ENCODE measurements at regions of chr12 and their contacts with region 1.

Region 1: GRCh38 chr12:49967042-49967776 is 5.5 kb downstream of the AQP5 start:
- DNase-seq: peak; percentile 15
- ATAC-seq: peak; percentile 94
- H3K4me3 ChIP-seq: no peak overlapping the region
- H3K27ac ChIP-seq: no peak overlapping the region
- H3K4me1 ChIP-seq: peaks cover 8% of the 10 kb centered on the region
- H3K27me3 ChIP-seq: peaks cover 5 to 6% of the 10 kb centered on the region in 2 experiments; a peak in 3 of 4 replicates
- CTCF ChIP-seq: peak; percentile 88 to 96 (median 95)
- EP300 ChIP-seq: no peak
- POLR2A ChIP-seq: no peak
- RAD21 ChIP-seq: peak; percentile 87

Region 2: DNA sequence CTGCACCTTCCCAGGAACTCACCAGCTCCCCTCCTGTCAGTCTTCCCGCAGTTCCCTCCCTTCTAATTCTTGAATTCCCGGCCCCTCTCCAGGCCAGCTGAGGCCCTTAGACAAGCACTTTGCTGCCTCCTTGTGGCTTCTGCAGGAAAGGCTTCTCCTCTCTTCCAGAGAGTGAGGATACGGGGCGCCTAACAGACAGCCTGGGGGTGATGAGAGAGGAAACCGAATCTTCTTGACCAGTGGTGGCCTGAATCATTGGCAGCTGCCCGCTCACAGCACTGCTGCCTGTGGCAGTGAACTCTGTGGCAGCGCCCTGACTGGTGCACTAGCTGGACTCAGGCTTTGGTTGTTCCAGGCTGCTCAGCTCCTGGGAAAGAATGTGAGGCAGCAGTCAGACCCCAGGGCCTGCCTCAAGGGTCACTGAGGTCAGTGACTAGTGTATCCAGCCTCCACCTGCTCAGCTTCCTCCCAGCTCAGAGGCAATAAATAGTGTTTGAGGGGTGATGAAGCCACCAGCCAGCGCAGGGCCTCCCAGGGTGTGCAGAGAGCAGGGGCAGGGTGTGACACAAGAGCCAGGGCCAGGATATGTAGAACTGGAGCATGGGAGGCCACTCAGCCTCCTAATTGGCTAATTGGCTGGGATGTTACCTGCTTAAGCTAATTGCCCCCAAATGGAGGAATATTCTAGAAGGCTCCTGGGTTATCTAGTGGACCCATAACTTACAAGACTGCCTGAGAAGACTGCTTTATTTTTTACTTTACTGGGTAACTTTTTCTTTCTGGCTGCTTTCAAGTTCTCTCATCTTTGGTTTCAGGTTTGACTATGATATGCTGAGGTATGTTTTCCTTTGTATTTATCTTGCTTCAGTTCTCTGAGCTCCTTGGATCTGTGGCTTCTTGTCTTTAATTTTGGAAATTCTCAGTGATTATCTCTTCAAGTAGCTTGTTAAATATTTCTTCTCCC is 386.4 kb before region 1 on chr12:
- CTCF ChIA-PET with region 1: no interaction called
- POLR2A ChIA-PET with region 1: no interaction called
- RAD21 ChIA-PET with region 1: no interaction called
- SMC1A ChIA-PET with region 1: no interaction called
- in situ Hi-C with region 1: no loop called
- intact Hi-C with region 1: no loop called
- DNase-seq: no peak
- ATAC-seq: peak; percentile 92
- H3K4me3 ChIP-seq: peak overlapping the region; percentile 57; the same call in 1 of the 2 replicates
- H3K27ac ChIP-seq: peak overlapping the region; percentile 41
- H3K4me1 ChIP-seq: peaks cover 17% of the 10 kb centered on the region
- H3K27me3 ChIP-seq: no peaks in the 10 kb centered on the region
- CTCF ChIP-seq: peak; percentile 89 to 92 (median 90)
- EP300 ChIP-seq: no peak
- POLR2A ChIP-seq: no peak
- RAD21 ChIP-seq: peak; percentile 88

Region 3: GRCh38 chr12:49950273-49951251 is 16.6 kb before region 1 on chr12 and contains the start of gene AQP2:
- CTCF ChIA-PET with region 1: interaction called, 35 read pairs
- POLR2A ChIA-PET with region 1: no interaction called
- RAD21 ChIA-PET with region 1: no interaction called
- SMC1A ChIA-PET with region 1: interaction called, 6 read pairs
- in situ Hi-C with region 1: no loop called
- intact Hi-C with region 1: no loop called
- DNase-seq: no peak
- ATAC-seq: no peak
- H3K4me3 ChIP-seq: no peak within 1 kb of the TSS
- H3K27ac ChIP-seq: no peak within 1 kb of the TSS
- H3K4me1 ChIP-seq: no peaks in the 10 kb centered on the region
- H3K27me3 ChIP-seq: peaks cover 6 to 7% of the 10 kb centered on the region in 2 experiments; a peak in 3 of 4 replicates
- CTCF ChIP-seq: no peak
- EP300 ChIP-seq: no peak
- POLR2A ChIP-seq: no peak
- RAD21 ChIP-seq: no peak
- polyA plus RNA-seq, gene AQP2: not detected

Region 4: GRCh38 chr12:50006789-50007436 is 39.7 kb after region 1 on chr12:
- CTCF ChIA-PET with region 1: interaction called, 12 read pairs
- POLR2A ChIA-PET with region 1: no interaction called
- RAD21 ChIA-PET with region 1: interaction called, 5 read pairs
- SMC1A ChIA-PET with region 1: interaction called, 4 read pairs
- in situ Hi-C with region 1: no loop called
- intact Hi-C with region 1: no loop called
- DNase-seq: no peak
- ATAC-seq: no peak
- H3K4me3 ChIP-seq: no peak overlapping the region
- H3K27ac ChIP-seq: no peak overlapping the region
- H3K4me1 ChIP-seq: peaks cover 10% of the 10 kb centered on the region; the same call in 1 of the 2 replicates
- H3K27me3 ChIP-seq: no peaks in the 10 kb centered on the region
- CTCF ChIP-seq: no peak
- EP300 ChIP-seq: no peak
- POLR2A ChIP-seq: no peak
- RAD21 ChIP-seq: no peak

Region 5: DNA sequence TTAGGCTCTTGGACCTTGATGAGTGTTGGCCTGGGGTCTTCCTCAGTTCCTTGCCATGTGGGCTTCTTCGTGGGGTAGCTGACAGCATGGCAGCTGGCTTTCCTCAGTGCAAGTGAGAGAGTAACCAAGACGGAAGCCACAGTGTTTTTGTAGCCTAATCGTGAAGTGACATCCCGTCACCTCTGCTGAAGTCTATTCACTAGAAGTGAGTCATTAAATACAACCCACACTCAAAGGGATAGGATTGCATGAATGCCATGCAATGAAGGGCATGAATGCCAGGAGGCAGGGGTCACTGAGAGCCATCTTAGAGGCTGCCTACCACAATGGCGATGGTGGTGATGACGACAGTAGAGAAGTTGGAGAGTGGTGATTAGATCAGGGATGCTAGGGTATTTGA is 76.6 kb after region 1 on chr12:
- CTCF ChIA-PET with region 1: interaction called, 47 read pairs
- POLR2A ChIA-PET with region 1: no interaction called
- RAD21 ChIA-PET with region 1: interaction called, 4 read pairs
- SMC1A ChIA-PET with region 1: interaction called, 3 read pairs
- in situ Hi-C with region 1: no loop called
- intact Hi-C with region 1: loop called (anchors 1 kb)
- DNase-seq: no peak
- ATAC-seq: no peak
- H3K4me3 ChIP-seq: no peak overlapping the region
- H3K27ac ChIP-seq: no peak overlapping the region
- H3K4me1 ChIP-seq: no peaks in the 10 kb centered on the region
- H3K27me3 ChIP-seq: no peaks in the 10 kb centered on the region
- CTCF ChIP-seq: no peak
- EP300 ChIP-seq: no peak
- POLR2A ChIP-seq: no peak
- RAD21 ChIP-seq: no peak

Region 6: DNA sequence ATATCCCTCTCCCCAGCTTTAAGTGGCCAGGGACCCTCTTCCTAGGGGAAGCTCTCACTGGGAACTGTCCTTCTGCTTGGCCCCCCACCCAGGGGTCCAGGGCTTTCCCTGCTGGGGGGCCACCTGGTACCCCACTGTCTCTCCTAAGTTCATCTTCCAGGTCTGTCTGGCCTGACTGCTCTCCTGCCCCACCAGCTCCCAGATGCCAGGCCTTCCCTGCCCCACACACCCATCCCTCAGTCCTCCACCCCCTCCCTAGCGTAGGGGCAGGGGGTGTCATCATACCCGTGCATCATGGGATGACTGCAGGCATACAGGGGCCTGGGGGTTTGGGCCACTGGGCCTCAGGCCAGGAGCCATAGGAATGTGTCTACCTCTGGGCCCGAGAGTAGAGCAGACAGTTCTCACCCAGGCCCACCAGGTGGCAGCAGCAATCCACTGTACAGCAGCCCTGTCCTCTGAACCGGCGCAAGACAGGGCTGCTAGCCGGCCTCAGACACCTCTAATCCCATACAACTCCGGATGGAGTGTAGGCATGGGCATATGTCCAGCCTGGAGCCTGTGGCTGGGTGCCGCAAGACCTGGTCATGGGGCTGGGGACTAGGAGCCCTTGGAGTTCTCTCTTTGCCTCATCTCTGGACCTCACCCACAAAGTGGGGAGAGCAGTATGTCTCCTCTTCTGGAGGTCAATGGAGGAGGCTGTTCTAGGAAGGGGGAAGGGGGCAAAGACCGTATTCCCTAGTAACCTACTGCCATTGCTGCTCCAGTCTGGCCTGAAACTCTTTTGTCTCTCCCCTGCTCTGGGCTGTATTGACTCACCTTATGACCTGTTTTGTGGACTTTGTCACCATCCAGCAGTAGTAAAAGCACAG is 108.0 kb after region 1 on chr12:
- CTCF ChIA-PET with region 1: interaction called, 121 read pairs
- POLR2A ChIA-PET with region 1: interaction called, 4 read pairs
- RAD21 ChIA-PET with region 1: interaction called, 74 read pairs
- SMC1A ChIA-PET with region 1: interaction called, 25 read pairs
- in situ Hi-C with region 1: no loop called
- intact Hi-C with region 1: loop called (anchors 1 kb)
- DNase-seq: peak; percentile 37
- ATAC-seq: peak; percentile 96
- H3K4me3 ChIP-seq: no peak overlapping the region
- H3K27ac ChIP-seq: no peak overlapping the region
- H3K4me1 ChIP-seq: no peaks in the 10 kb centered on the region; the same call in 1 of the 2 replicates
- H3K27me3 ChIP-seq: no peaks in the 10 kb centered on the region; a peak in 1 of 4 replicates
- CTCF ChIP-seq: peak; percentile 91 to 98 (median 95); a peak in 5 of 6 replicates
- EP300 ChIP-seq: no peak
- POLR2A ChIP-seq: no peak
- RAD21 ChIP-seq: peak; percentile 87

Region 7: DNA sequence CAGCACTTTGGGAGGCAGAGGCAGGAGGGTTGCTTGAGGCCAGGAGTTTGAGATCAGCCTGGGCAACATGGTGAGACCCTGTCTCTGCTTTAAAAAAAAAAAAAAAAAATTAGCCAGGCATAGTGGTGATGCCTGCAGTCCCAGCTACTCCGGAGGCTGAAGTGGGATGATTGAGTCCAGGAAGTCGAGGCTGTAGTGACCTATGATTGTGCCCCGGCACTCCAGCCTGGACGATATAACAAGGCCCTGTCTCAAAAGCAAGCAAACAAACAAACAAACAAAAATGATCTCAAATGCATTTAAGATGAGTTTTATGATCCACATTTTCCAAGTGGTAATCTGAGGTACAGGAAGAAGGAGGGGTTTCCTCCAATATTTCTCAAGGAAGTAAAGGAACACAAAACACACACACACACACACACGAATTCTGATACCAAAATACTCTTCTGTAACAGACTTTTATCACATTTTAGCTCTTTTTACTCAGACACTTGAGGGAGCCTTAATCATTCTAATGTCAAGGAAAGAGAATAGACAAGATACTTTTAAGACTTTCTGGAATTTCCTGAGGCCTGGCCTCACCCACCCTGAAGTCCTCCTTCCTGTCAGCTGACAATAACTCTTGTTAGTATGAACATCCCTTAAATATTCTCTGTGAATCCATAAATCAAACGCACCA is 244.3 kb after region 1 on chr12:
- CTCF ChIA-PET with region 1: no interaction called
- POLR2A ChIA-PET with region 1: no interaction called
- RAD21 ChIA-PET with region 1: no interaction called
- SMC1A ChIA-PET with region 1: no interaction called
- in situ Hi-C with region 1: no loop called
- intact Hi-C with region 1: no loop called
- DNase-seq: no peak
- ATAC-seq: peak; percentile 6; the same call in 1 of the 3 replicates
- H3K4me3 ChIP-seq: no peak overlapping the region
- H3K27ac ChIP-seq: no peak overlapping the region; the same call in 1 of the 2 replicates
- H3K4me1 ChIP-seq: peaks cover 13% of the 10 kb centered on the region
- H3K27me3 ChIP-seq: no peaks in the 10 kb centered on the region
- CTCF ChIP-seq: peak in 1 of 3 experiments; percentile 39; a peak in 2 of 6 replicates
- EP300 ChIP-seq: no peak
- POLR2A ChIP-seq: no peak
- RAD21 ChIP-seq: peak; percentile 27; the same call in 1 of the 2 replicates

Measured in GM12878 (cell line).